MCF 10A (cell line): ENCODE measurements at regions of chr4 and their contacts with region 1.

Region 1: GRCh38 chr4:112099701-112100297 is 45.5 kb upstream of the FAM241A start:
- DNase-seq: peak; percentile 66
- H3K4me3 Mint-ChIP-seq: no peak overlapping the region
- H3K27ac Mint-ChIP-seq: peak overlapping the region; percentile 47
- H3K4me1 Mint-ChIP-seq: peaks cover 7% of the 10 kb centered on the region
- H3K27me3 Mint-ChIP-seq: no peaks in the 10 kb centered on the region
- CTCF ChIP-seq: peak; percentile 64

Region 2: DNA sequence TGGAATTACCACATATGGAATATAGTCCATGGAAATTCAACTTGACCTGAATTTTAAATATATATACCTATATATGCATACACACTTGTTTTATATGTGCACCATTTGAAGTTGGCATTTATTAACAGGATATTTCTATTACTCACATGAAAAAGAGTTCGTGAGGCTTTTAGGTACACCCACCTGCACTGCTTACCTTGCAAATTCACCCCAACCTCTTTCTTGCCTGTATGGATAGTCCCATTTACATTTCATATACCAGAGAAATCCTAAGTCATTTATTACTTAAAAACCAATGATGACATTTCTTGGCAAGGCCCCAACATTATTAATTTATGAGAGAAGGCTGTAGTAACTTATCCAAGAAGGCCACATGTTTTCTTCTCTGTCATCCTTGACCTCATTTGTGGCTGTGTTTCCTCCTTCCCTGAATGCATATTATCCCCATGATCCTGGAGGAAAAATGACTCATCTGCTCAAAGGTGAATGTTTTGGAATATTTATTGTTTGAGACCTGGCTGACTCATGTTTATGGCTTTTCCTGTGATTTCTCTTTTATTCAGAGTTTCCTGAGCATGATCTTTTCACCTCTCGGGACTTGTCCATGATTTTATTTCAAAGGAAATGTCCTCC is 16.7 kb before region 1 on chr4:
- CTCF ChIA-PET with region 1: interaction called, 15 read pairs
- POLR2A ChIA-PET with region 1: no interaction called
- intact Hi-C with region 1: no loop called
- DNase-seq: peak; percentile 96
- H3K4me3 Mint-ChIP-seq: no peak overlapping the region
- H3K27ac Mint-ChIP-seq: peak overlapping the region; percentile 79
- H3K4me1 Mint-ChIP-seq: peaks cover 24% of the 10 kb centered on the region
- H3K27me3 Mint-ChIP-seq: no peaks in the 10 kb centered on the region
- CTCF ChIP-seq: no peak

Region 3: GRCh38 chr4:112170451-112170993 is 70.7 kb after region 1 on chr4:
- CTCF ChIA-PET with region 1: interaction called, 23 read pairs
- POLR2A ChIA-PET with region 1: interaction called, 5 read pairs
- intact Hi-C with region 1: no loop called
- DNase-seq: peak; percentile 91
- H3K4me3 Mint-ChIP-seq: peak overlapping the region; percentile 11
- H3K27ac Mint-ChIP-seq: peak overlapping the region; percentile 89
- H3K4me1 Mint-ChIP-seq: peaks cover 47% of the 10 kb centered on the region
- H3K27me3 Mint-ChIP-seq: no peaks in the 10 kb centered on the region
- CTCF ChIP-seq: no peak

Region 4: GRCh38 chr4:112214390-112215264 is 114.8 kb after region 1 on chr4:
- CTCF ChIA-PET with region 1: interaction called, 23 read pairs
- POLR2A ChIA-PET with region 1: interaction called, 12 read pairs
- intact Hi-C with region 1: no loop called
- DNase-seq: peak; percentile 61
- H3K4me3 Mint-ChIP-seq: no peak overlapping the region
- H3K27ac Mint-ChIP-seq: peak overlapping the region; percentile 90
- H3K4me1 Mint-ChIP-seq: peaks cover 12% of the 10 kb centered on the region
- H3K27me3 Mint-ChIP-seq: no peaks in the 10 kb centered on the region
- CTCF ChIP-seq: peak; percentile 48

Region 5: DNA sequence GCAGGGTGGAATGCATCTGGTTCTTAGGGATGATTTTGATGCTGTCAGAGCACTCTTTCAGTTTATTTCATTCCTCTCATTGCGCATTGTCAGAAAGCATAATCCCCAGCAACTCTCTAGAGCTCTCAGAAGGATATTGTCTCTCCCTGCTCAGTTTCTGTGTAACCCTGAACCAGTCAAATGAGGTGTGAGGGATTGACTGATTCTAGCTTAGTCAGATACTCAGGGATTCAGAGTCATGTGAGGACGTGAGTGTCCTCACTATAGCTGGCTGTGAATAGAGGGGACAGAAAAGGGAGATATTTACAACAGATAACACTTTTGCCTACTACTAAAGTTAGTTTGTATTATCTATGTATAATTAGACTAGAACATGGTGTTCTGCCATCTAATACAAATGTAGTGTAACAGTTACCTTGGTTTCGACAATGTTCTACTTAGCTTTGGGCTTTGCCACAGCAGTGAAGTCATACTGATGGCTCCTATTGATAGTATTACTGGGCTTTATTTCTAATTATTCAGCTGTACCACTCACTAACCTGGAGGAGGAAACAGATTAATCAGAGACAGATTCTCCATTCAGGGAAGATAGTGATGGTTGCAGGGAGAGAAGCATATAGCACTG is 151.3 kb after region 1 on chr4:
- CTCF ChIA-PET with region 1: interaction called, 12 read pairs
- POLR2A ChIA-PET with region 1: interaction called, 3 read pairs
- intact Hi-C with region 1: no loop called
- DNase-seq: no peak
- H3K4me3 Mint-ChIP-seq: no peak overlapping the region
- H3K27ac Mint-ChIP-seq: no peak overlapping the region
- H3K4me1 Mint-ChIP-seq: peaks cover 5% of the 10 kb centered on the region
- H3K27me3 Mint-ChIP-seq: no peaks in the 10 kb centered on the region
- CTCF ChIP-seq: no peak

Region 6: DNA sequence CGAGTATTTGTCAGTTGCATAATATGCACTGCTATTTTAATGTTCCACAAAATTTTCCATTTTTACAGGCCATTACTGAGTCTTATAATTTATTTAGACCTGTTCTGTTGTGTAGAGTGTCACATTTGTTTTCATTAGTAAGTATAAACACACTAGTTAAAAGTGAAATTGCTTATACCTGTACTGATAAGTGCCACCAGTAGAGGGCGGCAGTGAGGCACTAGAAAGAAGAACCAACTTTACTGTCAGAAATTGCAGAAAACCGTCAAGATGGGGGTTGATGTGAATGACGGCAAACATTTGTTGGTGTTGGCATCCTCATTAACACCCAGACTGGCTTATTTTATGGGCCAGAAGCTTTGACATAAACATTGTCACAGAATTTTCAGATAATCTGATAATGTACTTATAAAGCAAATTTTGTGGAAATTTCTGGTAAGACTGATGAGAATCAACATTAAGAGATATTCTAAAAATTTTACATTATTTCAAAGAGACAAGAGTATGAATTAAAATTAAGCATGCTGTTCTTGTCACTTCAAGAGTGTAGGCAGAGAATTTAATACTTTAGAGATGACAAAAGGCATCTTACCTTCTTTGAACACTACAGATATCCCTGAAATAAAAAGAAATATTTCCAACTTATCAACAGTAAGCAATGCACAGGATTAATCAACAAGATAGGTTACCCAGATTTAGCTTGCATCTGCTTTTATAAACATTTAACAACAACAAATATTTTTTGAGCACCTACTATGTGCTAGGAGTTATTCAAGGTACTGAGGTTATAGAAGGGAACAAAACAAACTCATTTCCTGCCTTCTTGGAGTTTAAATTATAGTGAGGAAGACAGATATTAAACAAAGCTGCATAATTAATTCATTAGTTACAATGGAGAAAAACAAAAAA is 222.2 kb after region 1 on chr4:
- CTCF ChIA-PET with region 1: interaction called, 8 read pairs
- POLR2A ChIA-PET with region 1: interaction called, 3 read pairs
- intact Hi-C with region 1: loop called (anchors 2 kb)
- DNase-seq: peak; percentile 73
- H3K4me3 Mint-ChIP-seq: no peak overlapping the region
- H3K27ac Mint-ChIP-seq: no peak overlapping the region
- H3K4me1 Mint-ChIP-seq: peaks cover 6% of the 10 kb centered on the region
- H3K27me3 Mint-ChIP-seq: no peaks in the 10 kb centered on the region
- CTCF ChIP-seq: peak; percentile 87

Region 7: DNA sequence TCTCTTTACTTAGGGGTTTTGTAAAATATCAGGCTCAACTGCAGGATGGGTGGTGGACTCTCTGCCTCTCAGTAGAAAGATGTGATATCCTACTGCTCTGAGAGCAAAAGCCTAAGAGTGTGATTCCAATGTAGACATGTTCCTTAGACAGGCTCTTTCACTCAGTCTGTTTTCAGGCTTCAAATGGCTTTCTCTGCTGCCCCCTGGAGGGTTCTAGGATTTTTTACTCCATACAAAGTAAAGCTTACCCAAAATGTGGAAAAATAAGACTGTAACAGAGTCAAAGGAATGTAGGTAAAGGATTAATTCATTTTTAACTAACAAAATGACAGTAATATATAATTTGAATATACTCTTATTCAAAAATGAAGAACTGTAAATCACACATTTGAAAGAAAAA is 504.8 kb after region 1 on chr4:
- CTCF ChIA-PET with region 1: no interaction called
- POLR2A ChIA-PET with region 1: interaction called, 3 read pairs
- intact Hi-C with region 1: loop called (anchors 1 kb)
- DNase-seq: peak; percentile 66
- H3K4me3 Mint-ChIP-seq: no peak overlapping the region
- H3K27ac Mint-ChIP-seq: no peak overlapping the region
- H3K4me1 Mint-ChIP-seq: no peaks in the 10 kb centered on the region
- H3K27me3 Mint-ChIP-seq: no peaks in the 10 kb centered on the region
- CTCF ChIP-seq: peak; percentile 47